ENCODE measurements at regions of chr5 and their contacts with region 1.

Region 1: GRCh38 chr5:141349917-141350619 is at the start of gene PCDHGB1:
- DNase-seq: no peak
- H3K4me3 ChIP-seq: no peak within 1 kb of the TSS
- H3K27ac ChIP-seq: no peak within 1 kb of the TSS
- H3K4me1 ChIP-seq: no peaks in the 10 kb centered on the region
- H3K27me3 ChIP-seq: peaks cover 25 to 48% of the 10 kb centered on the region in 2 experiments
- CTCF ChIP-seq: peak; percentile 41 to 44
- POLR2A ChIP-seq: no peak
- total RNA-seq, gene PCDHGB1: 0.58 and 0.62 TPM in 2 replicates

Region 2: GRCh38 chr5:140672455-140673186 is 677.4 kb before region 1 on chr5:
- CTCF ChIA-PET with region 1: no interaction called
- POLR2A ChIA-PET with region 1: no interaction called
- dilution Hi-C with region 1: no loop called
- intact Hi-C with region 1: no loop called
- DNase-seq: peak; percentile 31
- H3K4me3 ChIP-seq: peak overlapping the region in 1 of 3 experiments; percentile 6
- H3K27ac ChIP-seq: no peak overlapping the region
- H3K4me1 ChIP-seq: peaks cover 3% of the 10 kb centered on the region
- H3K27me3 ChIP-seq: no peaks in the 10 kb centered on the region
- CTCF ChIP-seq: no peak
- POLR2A ChIP-seq: no peak

Region 3: DNA sequence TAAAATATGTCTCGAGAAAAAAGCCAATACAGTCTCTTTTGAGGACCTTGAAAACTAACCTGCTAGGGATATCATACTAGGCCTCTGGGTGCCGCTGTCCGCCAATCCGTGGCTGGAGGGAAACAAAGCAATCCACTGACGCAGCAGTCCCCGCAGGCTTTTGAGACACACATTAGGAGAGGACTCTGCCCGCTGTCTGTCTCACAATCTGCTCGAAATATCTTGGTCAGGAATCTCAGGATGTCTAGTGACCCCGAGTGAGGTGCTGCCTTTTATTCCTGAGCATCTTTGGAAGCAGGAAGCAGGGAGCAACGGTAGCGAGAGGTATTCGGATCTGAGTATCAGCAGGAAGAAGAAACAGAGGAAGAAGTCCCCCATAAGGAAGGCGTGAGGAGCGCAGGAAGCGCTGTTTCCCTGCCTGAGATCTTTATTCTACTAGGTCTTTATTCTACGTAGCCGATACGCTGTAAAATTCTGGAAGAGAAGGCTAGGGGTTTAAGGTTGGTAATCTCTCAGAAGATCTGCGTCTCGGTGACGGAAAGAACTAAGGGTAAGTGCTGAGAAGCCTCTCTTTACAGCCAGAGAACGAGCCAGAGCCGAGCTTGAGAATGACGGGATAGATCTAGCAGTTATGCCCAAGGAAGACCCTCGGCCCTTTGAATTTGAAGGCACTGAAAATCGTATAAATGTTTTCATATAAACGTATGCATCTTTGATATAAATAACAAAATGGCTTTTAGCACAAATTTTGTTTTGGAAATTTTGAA is 23.8 kb before region 1 on chr5:
- CTCF ChIA-PET with region 1: interaction called, 17 read pairs
- POLR2A ChIA-PET with region 1: no interaction called
- dilution Hi-C with region 1: no loop called
- intact Hi-C with region 1: no loop called
- DNase-seq: peak; percentile 77
- H3K4me3 ChIP-seq: peak overlapping the region; percentile 27 to 74 (median 50)
- H3K27ac ChIP-seq: no peak overlapping the region
- H3K4me1 ChIP-seq: no peaks in the 10 kb centered on the region
- H3K27me3 ChIP-seq: peaks cover 14 to 31% of the 10 kb centered on the region in 2 experiments
- CTCF ChIP-seq: peak; percentile 65 to 70
- POLR2A ChIP-seq: no peak

Measured in endothelial cell of umbilical vein (primary cell).